Left cardiac atrium (tissue), 4 donors: ENCODE measurements at regions of chr3 and their contacts with region 1.

Region 1: DNA sequence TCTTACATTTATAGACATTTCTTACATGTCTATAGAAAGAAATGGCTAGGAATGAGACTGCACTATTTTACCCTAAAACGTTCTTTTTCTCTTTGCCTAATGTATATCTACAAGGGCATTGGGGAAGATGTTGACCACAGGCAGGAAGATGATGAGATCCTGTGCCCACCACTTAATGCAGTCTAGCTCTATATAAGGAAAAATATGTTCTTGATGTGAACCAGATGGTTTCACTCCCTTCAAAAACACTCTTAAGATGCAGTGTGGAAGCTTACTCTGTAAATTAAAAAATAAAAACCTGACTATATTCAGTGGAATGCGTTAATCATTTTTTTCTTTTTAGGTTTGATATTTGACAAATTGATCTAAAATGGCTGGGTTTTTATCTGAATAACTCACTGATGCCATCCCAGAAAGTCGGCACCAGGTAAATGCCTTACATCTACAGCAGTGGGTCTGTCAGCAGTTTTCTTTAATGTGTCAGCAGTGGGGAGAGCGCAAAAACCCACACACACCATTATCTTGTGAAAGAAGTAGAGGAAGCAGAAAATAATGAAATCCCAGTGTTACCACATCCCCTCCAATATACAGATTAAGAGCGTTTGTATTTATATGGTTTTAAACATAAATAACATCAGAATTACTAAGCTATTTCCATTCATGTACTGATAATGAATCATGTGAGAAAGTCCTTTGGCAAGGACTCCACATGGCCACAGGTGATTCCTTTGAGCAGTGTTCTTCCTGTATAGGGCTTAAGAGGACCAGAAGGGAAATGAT is 10.1 kb downstream of the AGTR1 start:
- DNase-seq: no peak
- ATAC-seq: no peak

Region 2: GRCh38 chr3:148643389-148643840 is 64.4 kb before region 1 on chr3:
- intact Hi-C with region 1: loop called in 1 of 2 experiments (anchors 10 kb)
- DNase-seq: no peak
- ATAC-seq: peak in 1 of 2 donors; percentile 73